Left ventricle myocardium inferior (tissue), 1 donor: ENCODE measurements at regions of chr7 and their contacts with region 1.

Region 1: DNA sequence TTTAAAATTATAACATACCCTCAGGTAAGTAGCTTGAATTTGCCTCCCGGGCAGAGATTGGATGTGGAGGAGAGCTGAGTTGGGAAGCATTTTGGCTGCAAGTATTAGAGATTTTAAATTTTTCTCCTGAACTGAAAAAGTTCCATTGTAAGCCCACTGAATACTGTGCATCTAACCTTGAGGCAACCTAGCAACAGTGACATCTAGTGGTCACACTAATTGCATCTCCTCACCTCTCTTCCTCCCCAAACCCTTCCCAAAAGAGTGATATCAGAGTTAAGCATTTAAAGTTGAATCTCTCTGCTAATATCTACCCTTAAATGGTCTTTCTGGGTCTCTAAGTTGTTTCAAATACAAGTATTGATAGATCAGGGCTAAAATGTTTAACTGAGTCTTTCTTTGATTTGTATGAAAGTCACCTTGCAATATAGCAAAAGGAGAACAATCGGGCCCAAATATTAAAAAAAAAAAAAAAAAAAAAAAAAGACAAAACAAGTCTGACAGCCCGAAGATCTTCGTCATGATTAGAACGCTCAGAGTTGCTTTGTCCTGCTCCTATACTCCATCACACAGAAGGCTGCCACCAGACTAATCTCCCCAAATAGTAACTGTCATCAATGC is 40.4 kb upstream of the DLX5 start:
- DNase-seq: no peak
- H3K4me3 ChIP-seq: no peak overlapping the region
- H3K27ac ChIP-seq: no peak overlapping the region
- H3K4me1 ChIP-seq: no peaks in the 10 kb centered on the region
- H3K27me3 ChIP-seq: peaks cover 9% of the 10 kb centered on the region
- CTCF ChIP-seq: peak; percentile 80

Region 2: GRCh38 chr7:95916573-95917297 is 1148.3 kb before region 1 on chr7:
- intact Hi-C with region 1: loop called (anchors 10 kb)
- DNase-seq: peak; percentile 79
- H3K4me3 ChIP-seq: peak overlapping the region; percentile 9
- H3K27ac ChIP-seq: no peak overlapping the region
- H3K4me1 ChIP-seq: no peaks in the 10 kb centered on the region
- H3K27me3 ChIP-seq: no peaks in the 10 kb centered on the region
- CTCF ChIP-seq: peak; percentile 92

Region 3: GRCh38 chr7:96729822-96730221 is 335.3 kb before region 1 on chr7:
- intact Hi-C with region 1: no loop called
- DNase-seq: no peak
- H3K4me3 ChIP-seq: no peak overlapping the region
- H3K27ac ChIP-seq: no peak overlapping the region
- H3K4me1 ChIP-seq: no peaks in the 10 kb centered on the region
- H3K27me3 ChIP-seq: peaks cover 19% of the 10 kb centered on the region
- CTCF ChIP-seq: no peak